CD4-positive, alpha-beta memory T cell (primary cell): ENCODE measurements at regions of chr7 and their contacts with region 1.

Region 1: GRCh38 chr7:48035301-48035966 is at the start of gene C7orf57:
- DNase-seq: peak; percentile 83 to 88 (median 86)
- H3K4me3 ChIP-seq: peak within 1 kb of the TSS; percentile 68 to 69
- H3K4me3 Mint-ChIP-seq: peak within 1 kb of the TSS; percentile 78 to 94 (median 88)
- H3K27ac ChIP-seq: peak within 1 kb of the TSS; percentile 11
- H3K27ac Mint-ChIP-seq: peak within 1 kb of the TSS; percentile 43 to 96 (median 88)
- H3K4me1 ChIP-seq: peaks cover 7% of the 10 kb centered on the region
- H3K4me1 Mint-ChIP-seq: peaks cover 4 to 11% (median 8%) of the 10 kb centered on the region in 4 donors
- H3K27me3 ChIP-seq: no peaks in the 10 kb centered on the region
- H3K27me3 Mint-ChIP-seq: peaks cover 6 to 12% of the 10 kb centered on the region in 2 donors
- total RNA-seq, gene C7orf57: not detected

Region 2: GRCh38 chr7:47873762-47874161 is 161.7 kb before region 1 on chr7:
- CTCF ChIA-PET with region 1: no interaction called
- POLR2A ChIA-PET with region 1: no interaction called
- intact Hi-C with region 1: no loop called
- DNase-seq: no peak
- H3K4me3 ChIP-seq: no peak overlapping the region
- H3K4me3 Mint-ChIP-seq: no peak overlapping the region
- H3K27ac ChIP-seq: no peak overlapping the region
- H3K27ac Mint-ChIP-seq: no peak overlapping the region
- H3K4me1 ChIP-seq: no peaks in the 10 kb centered on the region
- H3K4me1 Mint-ChIP-seq: no peaks in the 10 kb centered on the region
- H3K27me3 ChIP-seq: no peaks in the 10 kb centered on the region
- H3K27me3 Mint-ChIP-seq: peaks cover 0 to 1% of the 10 kb centered on the region in 2 donors

Region 3: DNA sequence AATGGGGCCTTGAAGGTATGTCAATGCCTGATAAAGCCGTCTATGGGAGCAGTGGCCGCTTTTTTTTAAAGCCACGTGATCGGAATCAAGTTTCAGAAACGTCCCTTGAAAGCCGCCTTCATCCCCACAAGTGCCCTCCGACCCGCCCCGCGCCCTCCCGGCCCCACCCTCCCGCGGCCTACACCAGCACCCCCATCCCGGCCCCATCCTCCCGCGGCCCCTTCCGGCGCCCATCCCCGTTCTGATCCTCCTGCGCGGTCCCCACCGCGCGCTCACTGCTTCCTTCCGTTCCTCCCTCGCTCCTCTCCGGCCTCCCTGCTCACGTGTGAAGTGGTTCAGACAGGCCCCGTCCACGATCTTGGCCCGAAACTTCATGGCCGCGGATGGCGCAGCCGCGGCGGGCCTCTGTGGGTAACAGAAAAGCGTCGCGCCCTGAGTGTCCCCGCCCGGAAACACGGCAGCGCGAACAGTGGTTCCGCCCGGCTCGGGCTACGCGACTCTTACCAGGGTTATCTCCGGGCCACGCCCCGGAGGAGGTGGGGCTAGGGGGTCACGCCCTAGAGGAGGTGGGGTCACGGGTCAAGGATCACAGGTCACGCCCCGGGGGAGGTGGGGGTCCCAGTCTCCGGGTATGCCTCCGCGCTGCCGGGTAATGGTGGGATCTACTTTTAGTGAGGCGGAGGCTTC is 56.1 kb before region 1 on chr7 and contains the start of gene HUS1:
- CTCF ChIA-PET with region 1: no interaction called
- POLR2A ChIA-PET with region 1: no interaction called
- intact Hi-C with region 1: loop called (anchors 1 kb)
- DNase-seq: peak; percentile 89 to 94 (median 90)
- H3K4me3 ChIP-seq: peak within 1 kb of the TSS; percentile 72 to 81
- H3K4me3 Mint-ChIP-seq: peak within 1 kb of the TSS; percentile 92 to 99 (median 95)
- H3K27ac ChIP-seq: peak within 1 kb of the TSS; percentile 83
- H3K27ac Mint-ChIP-seq: peak within 1 kb of the TSS; percentile 97 to 100 (median 98)
- H3K4me1 ChIP-seq: peaks cover 23% of the 10 kb centered on the region
- H3K4me1 Mint-ChIP-seq: peaks cover 14 to 32% (median 24%) of the 10 kb centered on the region in 4 donors
- H3K27me3 ChIP-seq: no peaks in the 10 kb centered on the region
- H3K27me3 Mint-ChIP-seq: no peaks in the 10 kb centered on the region
- total RNA-seq, gene HUS1: 72.5 to 74.1 TPM

Region 4: GRCh38 chr7:48046458-48046857 is 11.0 kb after region 1 on chr7:
- CTCF ChIA-PET with region 1: no interaction called
- POLR2A ChIA-PET with region 1: interaction called, 5 read pairs
- intact Hi-C with region 1: loop called (anchors 1 kb)
- DNase-seq: peak; percentile 32 to 55 (median 39)
- H3K4me3 ChIP-seq: no peak overlapping the region
- H3K4me3 Mint-ChIP-seq: peak overlapping the region in 5 of 8 donors; percentile 23 to 47 (median 41)
- H3K27ac ChIP-seq: no peak overlapping the region
- H3K27ac Mint-ChIP-seq: peak overlapping the region; percentile 1 to 80 (median 62)
- H3K4me1 ChIP-seq: peaks cover 27% of the 10 kb centered on the region
- H3K4me1 Mint-ChIP-seq: peaks cover 21 to 38% (median 31%) of the 10 kb centered on the region in 4 donors
- H3K27me3 ChIP-seq: no peaks in the 10 kb centered on the region
- H3K27me3 Mint-ChIP-seq: no peaks in the 10 kb centered on the region

Region 5: DNA sequence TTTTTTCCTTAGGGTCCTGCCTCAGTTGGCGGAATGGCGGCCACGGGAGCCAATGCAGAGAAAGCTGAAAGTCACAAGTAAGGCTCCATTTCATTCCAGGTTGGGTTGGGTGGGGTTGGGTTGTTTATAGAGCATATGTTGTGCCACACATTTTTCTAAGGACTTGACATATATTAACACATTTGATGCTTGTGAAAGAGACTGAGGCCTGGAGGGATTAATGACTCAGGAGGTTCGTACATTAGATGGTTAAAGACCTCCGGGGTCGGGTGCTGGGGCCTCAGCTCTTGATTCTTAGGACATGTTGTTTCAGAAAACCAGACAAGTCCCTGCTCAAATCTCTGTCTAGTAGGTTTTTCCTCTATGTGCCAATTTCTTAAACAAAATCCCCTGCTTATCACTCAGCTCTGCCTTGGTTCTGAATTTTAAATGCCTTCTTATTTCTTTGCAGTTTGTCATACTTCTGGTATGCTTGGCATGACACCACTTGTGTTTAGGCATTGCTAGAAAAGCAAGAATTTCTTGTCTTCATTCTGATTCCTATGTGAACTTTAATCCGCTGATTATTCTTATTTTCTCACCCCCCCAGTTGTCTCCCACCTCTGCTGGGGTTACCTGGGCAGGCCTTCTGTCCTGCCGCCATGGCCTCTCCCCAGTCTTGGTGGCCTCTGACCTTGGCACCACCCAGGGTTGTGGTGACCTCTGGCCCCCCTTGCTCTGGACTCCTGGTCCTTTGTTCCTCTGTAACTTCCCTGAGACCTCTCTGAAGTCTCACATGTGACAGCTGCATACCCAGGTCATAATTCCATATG is 59.5 kb after region 1 on chr7:
- CTCF ChIA-PET with region 1: no interaction called
- POLR2A ChIA-PET with region 1: interaction called, 13 read pairs
- intact Hi-C with region 1: loop called (anchors 2 kb)
- DNase-seq: no peak
- H3K4me3 ChIP-seq: no peak overlapping the region
- H3K4me3 Mint-ChIP-seq: peak overlapping the region in 7 of 8 donors; percentile 25 to 54 (median 30)
- H3K27ac ChIP-seq: no peak overlapping the region
- H3K27ac Mint-ChIP-seq: peak overlapping the region; percentile 33 to 92 (median 74)
- H3K4me1 ChIP-seq: peaks cover 100% of the 10 kb centered on the region
- H3K4me1 Mint-ChIP-seq: peaks cover 63 to 98% (median 84%) of the 10 kb centered on the region in 4 donors
- H3K27me3 ChIP-seq: no peaks in the 10 kb centered on the region
- H3K27me3 Mint-ChIP-seq: no peaks in the 10 kb centered on the region

Region 6: GRCh38 chr7:48847917-48848316 is 812.5 kb after region 1 on chr7:
- CTCF ChIA-PET with region 1: no interaction called
- POLR2A ChIA-PET with region 1: no interaction called
- intact Hi-C with region 1: no loop called
- DNase-seq: no peak
- H3K4me3 ChIP-seq: no peak overlapping the region
- H3K4me3 Mint-ChIP-seq: no peak overlapping the region
- H3K27ac ChIP-seq: no peak overlapping the region
- H3K27ac Mint-ChIP-seq: no peak overlapping the region
- H3K4me1 ChIP-seq: no peaks in the 10 kb centered on the region
- H3K4me1 Mint-ChIP-seq: no peaks in the 10 kb centered on the region
- H3K27me3 ChIP-seq: no peaks in the 10 kb centered on the region
- H3K27me3 Mint-ChIP-seq: no peaks in the 10 kb centered on the region